Caco-2 (cell line): ENCODE measurements at regions of chr18 and their contacts with region 1.

Region 1: GRCh38 chr18:8299054-8299980 is 309.9 kb upstream of the RAB12 start:
- DNase-seq: no peak
- H3K4me3 ChIP-seq: no peak overlapping the region
- H3K4me3 Mint-ChIP-seq: no peak overlapping the region
- H3K27ac Mint-ChIP-seq: no peak overlapping the region
- H3K4me1 ChIP-seq: no peaks in the 10 kb centered on the region
- H3K4me1 Mint-ChIP-seq: no peaks in the 10 kb centered on the region
- H3K27me3 ChIP-seq: no peaks in the 10 kb centered on the region
- H3K27me3 Mint-ChIP-seq: no peaks in the 10 kb centered on the region
- CTCF ChIP-seq: no peak

Region 2: DNA sequence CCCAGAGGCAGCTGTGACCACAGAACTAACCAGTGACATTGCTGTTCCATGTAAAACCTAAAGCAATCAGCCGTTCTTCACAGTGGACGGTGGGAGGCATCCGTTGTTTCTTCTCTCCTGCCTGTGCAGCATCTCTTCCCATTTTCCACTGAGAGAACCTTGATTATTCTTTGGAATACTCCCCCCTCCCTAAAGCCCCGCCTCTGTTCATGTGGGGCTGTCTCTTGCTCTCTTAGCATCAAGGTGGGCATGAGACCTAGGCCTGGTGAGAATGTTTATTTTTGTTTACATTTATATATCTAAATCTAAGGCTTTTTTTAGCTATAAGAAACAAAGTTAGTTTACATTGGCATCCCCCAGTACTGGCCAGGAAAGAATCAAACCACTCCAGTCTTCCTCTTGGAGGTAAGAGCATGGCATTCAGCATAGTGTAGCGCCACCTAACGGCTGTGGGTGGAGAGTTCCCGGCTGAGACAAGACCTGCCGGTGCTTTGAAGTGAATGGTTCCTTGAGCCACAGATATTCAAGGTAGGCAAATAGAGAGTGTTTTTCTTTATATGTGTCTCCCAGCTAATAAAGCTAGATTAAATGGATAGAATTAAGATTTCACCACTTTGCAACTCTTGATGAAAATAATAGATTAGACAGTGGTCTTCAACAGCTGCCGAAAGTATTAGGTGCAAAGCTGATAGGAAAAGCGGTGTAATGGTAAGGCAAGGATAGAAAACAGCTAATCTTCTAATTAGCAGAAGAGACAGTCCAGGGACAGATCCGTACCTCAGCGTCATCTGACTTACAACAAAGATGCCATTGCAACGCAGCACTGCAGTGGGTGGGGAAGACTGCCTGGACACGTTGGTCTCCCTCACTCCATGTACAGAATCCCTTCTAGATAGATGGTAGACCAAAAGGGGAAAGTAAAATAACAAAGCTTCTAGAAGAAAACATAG is 90.3 kb after region 1 on chr18:
- CTCF ChIA-PET with region 1: no interaction called
- POLR2A ChIA-PET with region 1: no interaction called
- intact Hi-C with region 1: loop called (anchors 10 kb)
- DNase-seq: peak; percentile 73 to 77
- H3K4me3 ChIP-seq: no peak overlapping the region
- H3K4me3 Mint-ChIP-seq: no peak overlapping the region
- H3K27ac Mint-ChIP-seq: peak overlapping the region; percentile 42
- H3K4me1 ChIP-seq: no peaks in the 10 kb centered on the region
- H3K4me1 Mint-ChIP-seq: no peaks in the 10 kb centered on the region
- H3K27me3 ChIP-seq: no peaks in the 10 kb centered on the region
- H3K27me3 Mint-ChIP-seq: no peaks in the 10 kb centered on the region
- CTCF ChIP-seq: peak; percentile 84 to 92